ENCODE measurements at regions of chr10 and their contacts with region 1.

Region 1: DNA sequence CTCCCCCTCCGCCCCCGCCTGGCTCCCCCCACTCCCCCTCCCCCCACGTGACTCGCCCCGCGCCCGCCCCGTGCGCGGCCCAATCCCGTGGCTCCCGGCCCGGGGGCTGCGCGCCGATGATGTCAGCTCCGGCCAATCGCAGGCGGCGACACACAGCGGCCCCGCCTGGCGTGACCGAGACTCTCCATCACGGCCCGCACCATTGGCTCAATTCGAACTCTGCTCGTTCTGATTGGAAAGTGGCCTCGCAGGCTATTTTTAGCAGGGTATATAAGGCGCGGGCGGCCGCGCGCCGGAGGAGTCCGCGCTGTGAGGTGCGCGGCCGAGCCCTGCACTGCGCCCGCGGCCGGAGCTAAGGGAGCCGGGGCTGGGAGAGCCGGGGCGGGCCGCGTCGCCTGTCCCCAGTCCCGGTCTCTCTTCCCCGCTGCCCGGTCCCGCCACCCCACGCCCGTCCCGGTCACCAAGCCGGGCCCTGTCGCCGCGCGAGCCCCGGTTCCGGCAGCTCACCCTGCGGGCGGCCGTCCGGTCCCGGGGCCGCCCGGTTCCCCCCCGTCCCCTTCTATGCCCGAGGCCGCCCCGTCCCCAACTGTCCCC is 345 bp upstream of the KLF6 start:
- DNase-seq: peak; percentile 98 to 99
- H3K4me3 ChIP-seq: peak overlapping the region; percentile 99
- H3K27ac ChIP-seq: peak overlapping the region; percentile 100
- H3K4me1 ChIP-seq: peaks cover 0 to 18% (median 7%) of the 10 kb centered on the region in 4 donors
- H3K27me3 ChIP-seq: no peaks in the 10 kb centered on the region
- CTCF ChIP-seq: no peak

Region 2: GRCh38 chr10:2340831-2341647 is 1444.3 kb before region 1 on chr10:
- intact Hi-C with region 1: no loop called
- DNase-seq: no peak
- H3K4me3 ChIP-seq: no peak overlapping the region
- H3K27ac ChIP-seq: no peak overlapping the region
- H3K4me1 ChIP-seq: no peaks in the 10 kb centered on the region
- H3K27me3 ChIP-seq: no peaks in the 10 kb centered on the region
- CTCF ChIP-seq: no peak

Region 3: GRCh38 chr10:3467052-3467951 is 318.1 kb before region 1 on chr10:
- intact Hi-C with region 1: loop called (anchors 5 kb)
- DNase-seq: peak; percentile 85 to 89
- H3K4me3 ChIP-seq: peak overlapping the region; percentile 26 to 31
- H3K27ac ChIP-seq: peak overlapping the region; percentile 81 to 82
- H3K4me1 ChIP-seq: peaks cover 4 to 69% (median 37%) of the 10 kb centered on the region in 4 donors
- H3K27me3 ChIP-seq: no peaks in the 10 kb centered on the region
- CTCF ChIP-seq: peak; percentile 28 to 42

Region 4: GRCh38 chr10:3838460-3839437 is 53.4 kb after region 1 on chr10:
- intact Hi-C with region 1: no loop called
- DNase-seq: no peak
- H3K4me3 ChIP-seq: no peak overlapping the region
- H3K27ac ChIP-seq: no peak overlapping the region
- H3K4me1 ChIP-seq: no peaks in the 10 kb centered on the region
- H3K27me3 ChIP-seq: no peaks in the 10 kb centered on the region
- CTCF ChIP-seq: no peak

Region 5: DNA sequence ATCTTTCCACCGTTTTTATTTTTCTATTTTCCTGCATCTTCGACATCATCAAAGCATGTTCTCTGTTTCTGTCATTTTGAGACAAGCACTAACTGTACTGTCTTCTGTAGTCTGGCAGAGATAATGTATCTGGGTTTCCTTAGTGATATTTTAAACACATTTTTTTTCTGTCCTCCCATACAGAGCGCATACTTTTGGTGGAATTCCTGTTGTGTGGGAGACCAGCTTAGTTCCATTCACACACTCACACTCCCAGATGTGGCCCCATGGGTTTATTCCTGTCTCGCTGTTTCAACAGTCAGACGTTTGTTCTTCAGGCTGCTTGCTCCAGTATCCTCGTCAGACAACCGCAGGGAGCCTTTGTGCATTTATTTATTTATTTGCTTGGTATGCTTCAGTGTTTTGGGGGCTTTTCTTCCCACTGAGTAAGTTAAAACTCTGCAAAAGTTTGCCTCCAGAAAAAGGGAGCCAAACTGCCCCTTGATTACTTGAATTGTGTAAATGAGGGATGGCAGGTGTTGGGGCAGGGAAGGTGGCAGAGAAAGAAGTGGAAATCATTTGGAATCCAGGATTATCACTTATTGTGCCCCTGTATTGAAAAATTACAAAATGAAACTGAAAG is 456.5 kb after region 1 on chr10:
- intact Hi-C with region 1: loop called (anchors 5 kb)
- DNase-seq: no peak
- H3K4me3 ChIP-seq: peak overlapping the region; percentile 52 to 53
- H3K27ac ChIP-seq: peak overlapping the region; percentile 87 to 88
- H3K4me1 ChIP-seq: peaks cover 0 to 58% (median 3%) of the 10 kb centered on the region in 4 donors
- H3K27me3 ChIP-seq: no peaks in the 10 kb centered on the region
- CTCF ChIP-seq: no peak

Region 6: GRCh38 chr10:4656576-4657182 is 871.3 kb after region 1 on chr10:
- intact Hi-C with region 1: loop called (anchors 10 kb)
- DNase-seq: peak; percentile 50 to 83
- H3K4me3 ChIP-seq: no peak overlapping the region
- H3K27ac ChIP-seq: no peak overlapping the region
- H3K4me1 ChIP-seq: peaks cover 0 to 29% (median 7%) of the 10 kb centered on the region in 4 donors
- H3K27me3 ChIP-seq: no peaks in the 10 kb centered on the region
- CTCF ChIP-seq: peak; percentile 89